ENCODE measurements at regions of chr1 and their contacts with region 1.

Region 1: DNA sequence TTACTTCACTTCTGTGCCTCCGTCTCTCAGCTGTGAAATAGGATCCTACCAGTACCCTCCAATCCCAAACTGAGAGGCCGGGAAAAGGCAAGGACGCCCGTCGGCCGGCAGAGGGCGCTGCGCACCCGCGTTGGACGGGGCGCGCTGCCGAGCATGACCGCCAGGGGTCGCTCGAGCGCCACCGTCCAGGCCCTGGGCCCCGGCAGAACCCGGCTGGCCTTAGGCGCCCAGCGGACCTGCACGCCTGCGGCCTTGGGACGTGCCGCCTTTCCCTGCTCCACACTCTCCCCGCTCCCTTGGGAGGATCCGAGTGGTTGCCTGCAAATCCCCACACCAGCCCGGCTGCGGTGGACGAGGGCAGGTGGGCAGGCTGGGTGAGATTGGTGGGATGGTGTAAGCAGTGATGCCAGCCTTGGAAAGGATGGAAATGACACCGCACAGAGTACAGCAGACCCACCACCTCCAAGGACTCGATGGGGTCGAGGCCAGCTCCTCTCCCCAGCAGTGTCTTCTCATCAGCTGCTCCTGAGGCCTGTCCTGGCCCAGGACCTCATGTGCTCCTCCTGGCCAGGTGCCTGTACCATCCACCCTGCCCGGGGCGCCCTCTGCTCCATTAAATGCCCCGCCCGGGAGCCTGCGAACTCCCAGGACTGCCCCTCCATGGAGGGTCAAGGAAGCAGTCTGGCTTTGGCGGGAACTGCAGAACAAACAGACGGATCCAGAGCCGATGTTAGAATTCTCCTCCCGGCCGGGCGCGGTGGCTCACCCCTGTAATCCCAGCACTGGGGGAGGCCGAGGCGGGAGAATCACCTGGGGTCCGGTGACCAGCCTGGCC is 47.4 kb upstream of the LBR start:
- DNase-seq: peak; percentile 64 to 74
- ATAC-seq: peak; percentile 82 to 91
- H3K4me3 ChIP-seq: 0 out of 3 replicates have a peak overlapping the region, but pooled peaks have one; percentile 3
- H3K27ac ChIP-seq: peak overlapping the region; percentile 68 to 78
- H3K4me1 ChIP-seq: peaks cover 8% of the 10 kb centered on the region; the same call in 2 of the 3 replicates
- CTCF ChIP-seq: peak; percentile 100
- EP300 ChIP-seq: no peak
- POLR2A ChIP-seq: no peak
- RAD21 ChIP-seq: peak; percentile 100

Region 2: GRCh38 chr1:225343624-225344023 is 131.6 kb before region 1 on chr1:
- CTCF ChIA-PET with region 1: no interaction called
- POLR2A ChIA-PET with region 1: no interaction called
- DNase-seq: peak in 1 of 2 experiments; percentile 33
- ATAC-seq: peak in 1 of 2 experiments; percentile 53; a peak in 2 of 6 replicates
- H3K4me3 ChIP-seq: no peak overlapping the region
- H3K27ac ChIP-seq: no peak overlapping the region
- H3K4me1 ChIP-seq: no peaks in the 10 kb centered on the region
- CTCF ChIP-seq: peak; percentile 51
- EP300 ChIP-seq: no peak
- POLR2A ChIP-seq: no peak
- RAD21 ChIP-seq: peak; percentile 38 to 47; a peak in 4 of 5 replicates

Region 3: DNA sequence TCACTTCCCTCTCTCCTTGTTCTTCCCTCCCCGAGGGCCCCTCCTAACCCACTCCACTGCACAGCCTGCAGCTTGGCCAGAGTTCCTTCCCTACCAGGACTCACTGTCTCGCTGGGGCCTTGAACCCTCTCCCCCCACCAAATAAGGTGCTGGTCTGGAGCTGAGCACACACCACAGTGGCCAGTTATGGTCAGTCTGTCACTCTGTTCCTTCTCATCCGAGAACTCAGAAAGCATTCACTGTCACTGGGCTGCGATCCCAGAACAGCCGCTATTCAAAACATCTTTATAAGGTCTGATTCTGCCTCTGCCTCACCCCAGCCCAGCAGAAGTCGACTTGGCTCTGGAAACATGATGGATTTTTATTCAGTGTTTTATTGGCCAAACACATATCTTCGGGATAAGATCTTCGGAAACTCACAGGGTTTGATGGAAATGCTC is 27.5 kb before region 1 on chr1:
- CTCF ChIA-PET with region 1: interaction called, 14 read pairs
- POLR2A ChIA-PET with region 1: no interaction called
- DNase-seq: no peak
- ATAC-seq: no peak
- H3K4me3 ChIP-seq: no peak overlapping the region
- H3K27ac ChIP-seq: peak overlapping the region in 1 of 2 experiments; percentile 84; a peak in 3 of 6 replicates
- H3K4me1 ChIP-seq: peaks cover 31% of the 10 kb centered on the region
- CTCF ChIP-seq: no peak
- EP300 ChIP-seq: no peak
- POLR2A ChIP-seq: no peak
- RAD21 ChIP-seq: no peak

Region 4: GRCh38 chr1:225526878-225527277 is 51.7 kb after region 1 on chr1:
- CTCF ChIA-PET with region 1: interaction called, 10 read pairs
- POLR2A ChIA-PET with region 1: no interaction called
- DNase-seq: no peak
- ATAC-seq: no peak
- H3K4me3 ChIP-seq: no peak overlapping the region
- H3K27ac ChIP-seq: no peak overlapping the region
- H3K4me1 ChIP-seq: peaks cover 18% of the 10 kb centered on the region; the same call in 2 of the 3 replicates
- CTCF ChIP-seq: no peak
- EP300 ChIP-seq: no peak
- POLR2A ChIP-seq: no peak
- RAD21 ChIP-seq: no peak

Region 5: DNA sequence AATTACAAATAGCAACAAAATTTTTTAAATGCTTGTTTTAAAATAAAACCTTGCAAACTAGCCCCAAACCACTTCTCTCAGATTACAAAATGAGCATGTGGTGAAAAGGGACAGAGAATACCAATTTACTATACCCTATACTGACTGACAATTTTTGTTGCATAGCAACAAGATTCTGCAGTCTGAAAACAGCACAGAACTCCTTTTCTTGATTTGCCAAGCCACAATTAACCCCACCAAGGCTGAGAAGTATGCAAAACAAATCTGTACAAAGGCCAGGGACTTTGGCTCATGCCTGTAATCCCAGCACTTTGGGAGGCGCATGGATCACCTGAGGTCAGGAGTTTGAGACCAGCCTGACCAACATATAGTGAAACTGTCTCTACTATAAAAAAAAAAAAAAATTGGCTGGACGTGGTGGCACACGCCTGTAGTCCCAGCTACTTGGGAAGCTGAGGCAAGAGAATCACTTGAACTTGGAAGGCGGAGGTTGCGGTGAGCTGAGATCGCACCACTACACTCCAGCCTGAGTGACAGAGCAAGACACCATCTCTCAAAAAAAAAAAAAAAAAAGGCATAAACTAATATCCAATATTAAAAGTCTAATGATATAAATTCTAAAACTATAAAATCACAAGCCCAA is 155.9 kb after region 1 on chr1:
- CTCF ChIA-PET with region 1: no interaction called
- POLR2A ChIA-PET with region 1: no interaction called
- DNase-seq: no peak
- ATAC-seq: no peak; a peak in 1 of 6 replicates
- H3K4me3 ChIP-seq: no peak overlapping the region
- H3K27ac ChIP-seq: no peak overlapping the region
- H3K4me1 ChIP-seq: peaks cover 41% of the 10 kb centered on the region
- CTCF ChIP-seq: no peak
- EP300 ChIP-seq: no peak
- POLR2A ChIP-seq: no peak
- RAD21 ChIP-seq: no peak

Region 6: GRCh38 chr1:225817611-225818061 is 342.4 kb after region 1 on chr1:
- CTCF ChIA-PET with region 1: interaction called, 77 read pairs
- POLR2A ChIA-PET with region 1: no interaction called
- DNase-seq: peak; percentile 65 to 94
- ATAC-seq: peak; percentile 62 to 67
- H3K4me3 ChIP-seq: no peak overlapping the region
- H3K27ac ChIP-seq: peak overlapping the region; percentile 96 to 99
- H3K4me1 ChIP-seq: peaks cover 87% of the 10 kb centered on the region
- CTCF ChIP-seq: no peak
- EP300 ChIP-seq: peak in 1 of 2 experiments; percentile 57; a peak in 1 of 5 replicates
- POLR2A ChIP-seq: no peak
- RAD21 ChIP-seq: peak; percentile 3 to 21; a peak in 1 of 5 replicates

Region 7: GRCh38 chr1:225871359-225872074 is 396.3 kb after region 1 on chr1:
- CTCF ChIA-PET with region 1: interaction called, 15 read pairs
- POLR2A ChIA-PET with region 1: no interaction called
- DNase-seq: peak; percentile 60 to 66
- ATAC-seq: peak; percentile 79 to 86
- H3K4me3 ChIP-seq: no peak overlapping the region
- H3K27ac ChIP-seq: peak overlapping the region in 1 of 2 experiments; percentile 30; a peak in 3 of 6 replicates
- H3K4me1 ChIP-seq: peaks cover 29% of the 10 kb centered on the region
- CTCF ChIP-seq: no peak
- EP300 ChIP-seq: no peak
- POLR2A ChIP-seq: no peak
- RAD21 ChIP-seq: no peak

Region 8: GRCh38 chr1:225923692-225924555 is 448.7 kb after region 1 on chr1 and contains the start of gene PYCR2:
- CTCF ChIA-PET with region 1: interaction called, 196 read pairs
- POLR2A ChIA-PET with region 1: no interaction called
- DNase-seq: peak; percentile 95 to 98
- ATAC-seq: peak; percentile 97 to 99
- H3K4me3 ChIP-seq: peak within 1 kb of the TSS; percentile 89
- H3K27ac ChIP-seq: peak within 1 kb of the TSS; percentile 98 to 99
- H3K4me1 ChIP-seq: peaks cover 16% of the 10 kb centered on the region
- CTCF ChIP-seq: no peak
- EP300 ChIP-seq: no peak
- POLR2A ChIP-seq: peak; percentile 94
- RAD21 ChIP-seq: no peak
- polyA plus RNA-seq, gene PYCR2: 45.4 and 45.8 TPM in 2 replicates

Region 9: DNA sequence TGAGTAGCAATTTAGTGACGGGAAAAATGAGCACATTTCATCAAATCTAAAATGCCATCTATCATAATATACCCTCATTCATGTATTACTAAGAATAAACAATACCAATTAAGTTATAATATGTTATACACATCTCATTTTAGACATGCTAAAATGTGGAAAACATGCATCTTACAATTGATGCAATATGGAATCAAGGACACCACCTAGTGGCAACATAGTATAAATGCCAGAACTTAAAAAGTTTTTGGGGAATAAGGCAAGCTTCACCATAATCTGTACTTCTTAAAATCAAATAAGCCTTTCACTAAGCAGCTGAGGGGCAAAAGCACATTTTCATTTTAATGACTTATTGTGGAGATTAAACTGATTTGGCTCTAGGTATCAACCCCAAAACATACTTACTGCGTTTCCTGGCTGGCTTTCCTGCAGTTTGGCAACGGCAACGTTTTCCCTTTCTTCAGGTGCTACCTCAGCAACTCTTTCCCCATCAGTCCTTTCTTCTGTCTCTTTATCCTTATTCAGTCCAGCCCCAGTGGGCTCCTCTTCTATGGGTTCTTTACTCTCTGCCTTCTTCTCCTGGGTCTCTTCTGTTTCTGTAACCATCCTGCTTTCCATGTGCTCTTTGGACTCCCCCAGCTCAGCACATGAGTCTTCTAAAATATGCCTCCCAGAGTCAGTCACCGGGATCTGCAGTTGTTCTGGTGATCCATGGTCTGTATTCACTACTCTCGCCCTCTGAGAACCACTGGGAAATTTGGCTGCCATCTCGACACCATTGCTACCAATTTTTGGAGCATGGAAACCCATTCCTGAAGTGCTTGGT is 512.5 kb after region 1 on chr1:
- CTCF ChIA-PET with region 1: interaction called, 18 read pairs
- POLR2A ChIA-PET with region 1: no interaction called
- DNase-seq: peak; percentile 42 to 58
- ATAC-seq: peak; percentile 56 to 72; a peak in 4 of 6 replicates
- H3K4me3 ChIP-seq: no peak overlapping the region
- H3K27ac ChIP-seq: no peak overlapping the region
- H3K4me1 ChIP-seq: no peaks in the 10 kb centered on the region
- CTCF ChIP-seq: peak; percentile 77
- EP300 ChIP-seq: no peak
- POLR2A ChIP-seq: no peak
- RAD21 ChIP-seq: peak; percentile 46 to 50; a peak in 4 of 5 replicates

Measured in A549 (cell line).